A673 (cell line): ENCODE measurements at regions of chr14 and their contacts with region 1.

Region 1: DNA sequence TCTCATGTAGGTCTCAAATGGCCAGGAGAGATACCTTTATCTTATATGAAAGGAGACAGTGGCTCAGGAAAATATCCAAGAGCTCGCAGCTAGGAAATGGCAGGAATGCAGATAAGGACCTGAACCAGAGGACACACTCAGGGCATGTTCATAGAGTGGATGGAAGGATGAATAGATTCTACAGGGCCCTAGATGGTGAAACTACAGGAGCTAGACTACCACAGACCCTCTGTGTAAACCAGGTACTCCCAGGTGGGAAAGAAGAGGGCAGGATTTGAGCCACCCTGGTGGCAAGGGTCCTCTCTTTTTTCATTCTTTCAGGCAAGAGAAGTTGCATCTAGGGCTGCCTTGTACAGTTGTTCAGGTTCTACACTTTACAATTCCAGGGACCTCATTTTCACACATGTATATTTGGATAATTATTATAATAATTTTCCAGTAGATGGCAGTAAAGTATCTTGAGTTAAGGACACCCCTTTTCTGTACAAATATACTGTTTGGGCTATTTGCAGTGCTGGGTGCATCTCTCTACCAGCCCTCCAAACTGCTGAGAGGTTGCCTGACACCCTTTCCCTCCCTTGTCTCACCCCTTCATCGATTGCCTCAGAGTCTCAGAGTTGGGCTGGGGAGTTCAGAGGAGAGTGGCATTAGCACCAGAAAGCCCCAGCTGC is 10.5 kb upstream of the ZDHHC22 start:
- DNase-seq: peak; percentile 68
- H3K4me3 ChIP-seq: no peak overlapping the region
- H3K27ac ChIP-seq: no peak overlapping the region
- H3K4me1 ChIP-seq: peaks cover 9% of the 10 kb centered on the region
- H3K27me3 ChIP-seq: peaks cover 20% of the 10 kb centered on the region
- CTCF ChIP-seq: peak; percentile 28; the same call in 1 of the 2 replicates

Region 2: GRCh38 chr14:77212943-77213678 is 61.1 kb after region 1 on chr14:
- CTCF ChIA-PET with region 1: interaction called, 5 read pairs
- POLR2A ChIA-PET with region 1: no interaction called
- intact Hi-C with region 1: loop called (anchors 5 kb)
- DNase-seq: peak; percentile 43
- H3K4me3 ChIP-seq: no peak overlapping the region
- H3K27ac ChIP-seq: no peak overlapping the region
- H3K4me1 ChIP-seq: no peaks in the 10 kb centered on the region
- H3K27me3 ChIP-seq: peaks cover 51% of the 10 kb centered on the region
- CTCF ChIP-seq: peak; percentile 80

Region 3: GRCh38 chr14:77353469-77354141 is 201.6 kb after region 1 on chr14:
- CTCF ChIA-PET with region 1: no interaction called
- POLR2A ChIA-PET with region 1: interaction called, 21 read pairs
- intact Hi-C with region 1: no loop called
- DNase-seq: no peak
- H3K4me3 ChIP-seq: no peak overlapping the region
- H3K27ac ChIP-seq: no peak overlapping the region
- H3K4me1 ChIP-seq: no peaks in the 10 kb centered on the region
- H3K27me3 ChIP-seq: no peaks in the 10 kb centered on the region
- CTCF ChIP-seq: no peak

Region 4: DNA sequence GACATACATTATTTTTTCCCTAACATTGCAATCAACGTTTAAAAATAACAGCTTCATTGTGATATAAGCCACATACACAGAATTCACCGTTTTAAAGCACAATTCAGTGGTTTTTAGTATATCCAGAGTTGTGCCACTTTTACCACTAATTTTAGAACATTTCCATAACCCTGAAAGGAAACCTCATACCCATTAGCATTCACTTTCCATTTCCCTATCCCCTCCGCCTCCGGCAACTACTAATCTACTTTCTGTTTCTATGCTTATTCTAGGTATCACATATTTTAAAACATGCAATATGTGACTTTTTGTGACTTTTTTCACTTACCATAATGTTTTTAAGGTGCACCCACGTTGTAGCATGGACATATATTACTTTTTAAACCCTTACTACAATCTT is 402.2 kb after region 1 on chr14:
- CTCF ChIA-PET with region 1: no interaction called
- POLR2A ChIA-PET with region 1: no interaction called
- intact Hi-C with region 1: loop called (anchors 5 kb)
- DNase-seq: no peak
- H3K4me3 ChIP-seq: no peak overlapping the region
- H3K27ac ChIP-seq: no peak overlapping the region
- H3K4me1 ChIP-seq: no peaks in the 10 kb centered on the region
- H3K27me3 ChIP-seq: no peaks in the 10 kb centered on the region
- CTCF ChIP-seq: no peak